Activated naive CD8-positive, alpha-beta T cell treated with anti-CD3 and anti-CD28 coated beads, Interleukin-2, amount 10 ng/mL, durations not matched to agents 7 days and 5 days (primary cell): ENCODE measurements at regions of chr1 and their contacts with region 1.

Region 1: DNA sequence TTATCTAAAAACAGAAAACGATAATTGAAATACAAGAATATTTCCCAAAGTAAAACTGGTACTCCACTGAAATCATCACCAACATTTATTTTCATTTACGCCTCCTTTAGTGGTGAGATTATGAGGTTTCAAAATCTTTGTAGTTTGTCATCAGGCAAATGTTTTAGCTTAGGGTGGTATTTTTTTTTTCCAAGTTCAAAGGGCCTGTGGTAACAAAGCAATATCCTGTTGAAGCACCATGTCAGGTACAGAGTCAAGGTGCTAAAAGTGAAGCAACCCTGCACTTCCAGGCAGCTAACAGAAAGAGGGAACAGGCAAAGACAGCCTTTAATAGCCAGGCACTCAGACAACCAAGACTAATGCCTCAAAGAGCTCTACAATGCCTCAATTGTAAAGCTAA is 89.2 kb downstream of the JAK1 start:
- DNase-seq: no peak
- ATAC-seq: peak; percentile 93
- H3K4me3 Mint-ChIP-seq: peak overlapping the region; percentile 71
- H3K27ac Mint-ChIP-seq: peak overlapping the region; percentile 77
- H3K4me1 Mint-ChIP-seq: peaks cover 47% of the 10 kb centered on the region
- H3K27me3 Mint-ChIP-seq: no peaks in the 10 kb centered on the region

Region 2: DNA sequence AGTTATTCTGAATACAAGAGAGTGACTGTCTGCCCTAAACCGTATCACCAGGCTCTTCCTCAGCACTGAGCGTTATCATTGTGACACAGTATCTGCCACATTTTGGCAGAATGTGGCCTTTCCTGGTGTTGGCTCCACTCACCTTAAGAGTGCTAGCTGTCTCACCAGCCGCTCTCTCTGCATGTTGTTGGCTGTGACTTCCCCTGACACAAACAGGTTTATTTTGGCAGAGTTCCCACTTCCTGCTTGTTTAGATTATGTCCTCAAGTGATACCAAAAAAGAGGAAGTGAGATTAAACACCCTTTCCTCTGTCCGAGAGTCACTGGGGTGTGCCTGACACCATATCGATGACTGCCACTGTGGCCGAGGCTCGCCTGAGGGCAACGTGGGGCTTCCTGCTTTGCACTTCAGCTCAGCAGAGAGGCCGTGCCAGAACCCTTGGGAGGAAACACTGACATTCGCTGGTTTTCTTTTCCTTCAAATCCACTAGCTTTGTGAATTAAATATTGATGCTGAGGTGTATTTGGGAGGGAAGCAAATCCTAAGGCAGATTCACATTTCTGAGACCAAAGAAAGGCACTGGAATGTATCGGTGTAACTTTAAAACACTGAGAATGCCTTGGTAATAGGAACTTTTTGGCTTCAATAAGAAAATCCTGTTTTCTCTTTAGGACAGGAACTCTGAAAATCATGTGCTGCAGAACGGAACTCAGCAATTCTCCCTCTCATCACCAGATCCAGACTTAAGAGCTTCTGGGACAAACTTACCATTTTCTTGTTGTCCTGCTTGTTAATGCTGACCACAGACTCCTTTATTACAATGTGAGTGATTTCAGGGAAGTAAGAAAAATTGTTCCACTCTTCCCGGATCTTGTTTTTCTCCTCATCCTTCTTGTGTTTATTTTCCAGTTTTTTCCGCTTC is 12.9 kb before region 1 on chr1:
- POLR2A ChIA-PET with region 1: interaction called, 10 read pairs
- DNase-seq: peak; percentile 50
- ATAC-seq: peak; percentile 89
- H3K4me3 Mint-ChIP-seq: peak overlapping the region; percentile 38
- H3K27ac Mint-ChIP-seq: peak overlapping the region; percentile 87
- H3K4me1 Mint-ChIP-seq: peaks cover 21% of the 10 kb centered on the region
- H3K27me3 Mint-ChIP-seq: no peaks in the 10 kb centered on the region